ENCODE measurements at regions of chr7 and their contacts with region 1.

Region 1: DNA sequence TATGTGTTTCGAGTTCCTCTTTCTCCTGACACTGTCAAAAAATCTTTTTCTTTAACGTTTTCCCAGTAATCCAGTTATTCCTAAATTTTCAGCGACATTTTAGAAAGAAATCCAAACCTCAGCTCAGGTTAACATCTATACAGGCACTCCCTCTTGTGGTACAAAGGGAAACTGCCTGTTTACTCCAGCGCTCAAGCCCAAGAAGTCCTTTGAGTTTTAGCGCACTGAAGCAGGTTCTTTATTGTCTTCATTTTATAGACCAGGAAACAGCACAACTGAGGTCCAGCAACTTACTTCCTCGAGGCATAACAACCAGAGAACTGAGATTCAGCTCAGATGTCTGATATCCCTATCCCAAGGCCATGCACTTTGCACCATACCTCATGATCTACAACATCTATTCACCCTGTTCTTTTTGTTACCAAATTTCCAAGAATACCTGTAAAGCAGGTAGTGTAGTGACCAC is 287.2 kb upstream of the MKLN1 start:
- DNase-seq: peak; percentile 69
- ATAC-seq: peak; percentile 81
- H3K4me3 Mint-ChIP-seq: peak overlapping the region; percentile 35
- H3K27ac Mint-ChIP-seq: peak overlapping the region; percentile 66
- H3K4me1 Mint-ChIP-seq: peaks cover 54% of the 10 kb centered on the region
- H3K27me3 Mint-ChIP-seq: no peaks in the 10 kb centered on the region

Region 2: DNA sequence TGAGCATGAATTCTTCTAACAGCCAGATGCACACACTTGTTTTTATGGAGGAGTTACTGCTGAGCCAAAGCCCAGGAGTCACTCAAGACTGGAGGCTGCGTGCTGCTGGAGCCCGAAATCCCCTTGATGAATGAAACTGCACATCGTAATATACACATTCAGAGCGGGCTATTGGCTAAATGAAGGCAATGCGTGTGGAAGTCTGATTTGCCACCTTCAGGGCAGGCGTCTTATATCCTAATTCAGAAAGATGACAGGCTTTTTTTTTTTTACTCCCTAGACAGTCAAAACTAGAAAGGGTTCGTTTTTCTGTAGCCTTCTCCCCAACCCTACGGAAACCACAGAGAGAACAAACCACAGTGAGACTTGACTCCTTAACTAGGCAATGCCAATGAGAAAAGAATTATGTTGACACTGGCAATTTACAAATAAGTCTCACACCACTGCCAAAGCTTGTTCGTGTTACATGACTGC is 79.3 kb before region 1 on chr7:
- CTCF ChIA-PET with region 1: interaction called, 12 read pairs
- DNase-seq: peak; percentile 93
- ATAC-seq: peak; percentile 82
- H3K4me3 Mint-ChIP-seq: peak overlapping the region; percentile 94
- H3K27ac Mint-ChIP-seq: peak overlapping the region; percentile 100
- H3K4me1 Mint-ChIP-seq: peaks cover 48% of the 10 kb centered on the region
- H3K27me3 Mint-ChIP-seq: no peaks in the 10 kb centered on the region

Region 3: DNA sequence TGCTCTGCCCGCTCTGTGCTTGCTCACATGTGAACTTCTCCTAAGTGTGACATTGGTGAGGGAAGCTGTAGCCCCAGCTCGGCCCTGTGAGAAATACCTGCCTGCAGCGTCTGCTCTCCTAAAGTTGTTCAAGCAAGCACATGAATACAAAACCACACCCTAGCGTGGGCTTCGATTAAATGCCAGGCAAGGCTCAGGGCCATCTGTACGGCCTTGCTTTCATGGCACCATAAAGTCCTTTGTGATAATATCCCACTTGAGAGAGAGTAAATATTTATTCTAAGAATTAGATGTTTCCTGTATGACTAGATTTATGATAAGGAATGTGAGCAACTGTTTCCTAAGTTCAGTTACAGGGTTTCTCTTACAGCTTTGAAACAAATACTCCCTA is 43.7 kb before region 1 on chr7:
- CTCF ChIA-PET with region 1: interaction called, 10 read pairs
- DNase-seq: no peak
- ATAC-seq: peak; percentile 62
- H3K4me3 Mint-ChIP-seq: peak overlapping the region; percentile 20
- H3K27ac Mint-ChIP-seq: peak overlapping the region; percentile 77
- H3K4me1 Mint-ChIP-seq: peaks cover 60% of the 10 kb centered on the region
- H3K27me3 Mint-ChIP-seq: no peaks in the 10 kb centered on the region

Region 4: DNA sequence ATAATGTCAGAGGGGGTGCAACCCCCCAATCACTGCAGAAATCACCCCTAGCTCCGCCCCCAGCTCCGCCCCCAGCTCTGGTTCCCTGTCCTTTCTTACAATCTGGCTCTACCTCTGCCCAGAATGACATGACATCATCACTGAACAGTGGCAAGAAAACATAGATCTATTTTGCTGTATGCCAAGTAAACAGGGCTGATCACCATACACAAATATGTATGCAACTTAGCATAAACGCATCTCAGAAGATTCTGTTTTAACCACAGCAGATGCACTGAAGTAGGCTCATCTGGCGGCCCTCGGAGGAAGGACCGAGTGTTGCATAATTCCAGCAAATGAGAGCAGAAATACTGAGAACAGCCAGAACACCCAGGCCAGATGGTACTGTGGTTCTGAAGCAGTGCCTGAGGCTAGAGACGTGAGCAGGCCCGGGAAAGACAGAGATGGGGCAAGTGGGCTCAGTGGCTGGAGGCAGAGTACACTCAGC is 13.2 kb before region 1 on chr7:
- CTCF ChIA-PET with region 1: interaction called, 14 read pairs
- DNase-seq: peak; percentile 69
- ATAC-seq: peak; percentile 43
- H3K4me3 Mint-ChIP-seq: peak overlapping the region; percentile 47
- H3K27ac Mint-ChIP-seq: peak overlapping the region; percentile 86
- H3K4me1 Mint-ChIP-seq: peaks cover 81% of the 10 kb centered on the region
- H3K27me3 Mint-ChIP-seq: no peaks in the 10 kb centered on the region

Measured in activated CD8-positive, alpha-beta memory T cell treated with anti-CD3 and anti-CD28 coated beads, Interleukin-2, amount 10 ng/mL, durations not matched to agents 7 days and 5 days (primary cell).